ENCODE measurements at regions of chr1 and their contacts with region 1.

Region 1: GRCh38 chr1:225652729-225653462 is at the start of gene ENAH:
- DNase-seq: peak; percentile 96
- H3K4me3 ChIP-seq: peak within 1 kb of the TSS; percentile 96 to 98
- H3K27ac ChIP-seq: peak within 1 kb of the TSS; percentile 95 to 99
- H3K4me1 ChIP-seq: peaks cover 18 to 41% of the 10 kb centered on the region in 2 experiments
- H3K27me3 ChIP-seq: no peaks in the 10 kb centered on the region
- CTCF ChIP-seq: no peak
- EP300 ChIP-seq: no peak
- RAD21 ChIP-seq: no peak
- polyA plus RNA-seq, gene ENAH: 48.9 and 72.0 TPM in 2 replicates

Region 2: DNA sequence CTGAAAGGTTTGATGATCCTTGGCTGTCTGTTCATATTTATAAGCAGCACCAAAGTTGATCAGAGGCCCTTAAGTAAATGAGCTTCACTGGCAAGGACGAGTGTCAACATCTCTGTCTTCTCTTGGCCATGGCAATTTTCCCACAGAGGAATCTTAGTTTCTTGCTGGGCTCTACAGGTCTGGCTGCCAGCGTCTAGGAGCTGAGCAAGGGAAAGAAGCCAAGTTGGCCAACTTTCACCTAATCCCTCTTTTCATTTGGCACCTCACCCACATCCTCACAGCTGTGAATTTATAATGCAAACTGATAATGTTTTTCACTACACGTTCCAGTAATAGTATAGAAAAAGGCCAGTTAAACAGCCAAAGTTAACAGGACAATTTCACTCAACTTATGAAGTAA is 126.0 kb before region 1 on chr1:
- CTCF ChIA-PET with region 1: no interaction called
- POLR2A ChIA-PET with region 1: no interaction called
- DNase-seq: no peak
- H3K4me3 ChIP-seq: no peak overlapping the region
- H3K27ac ChIP-seq: no peak overlapping the region
- H3K4me1 ChIP-seq: peaks cover 2 to 4% of the 10 kb centered on the region in 2 experiments; a peak in 2 of 4 replicates
- H3K27me3 ChIP-seq: no peaks in the 10 kb centered on the region
- CTCF ChIP-seq: no peak
- EP300 ChIP-seq: no peak
- RAD21 ChIP-seq: no peak

Region 3: DNA sequence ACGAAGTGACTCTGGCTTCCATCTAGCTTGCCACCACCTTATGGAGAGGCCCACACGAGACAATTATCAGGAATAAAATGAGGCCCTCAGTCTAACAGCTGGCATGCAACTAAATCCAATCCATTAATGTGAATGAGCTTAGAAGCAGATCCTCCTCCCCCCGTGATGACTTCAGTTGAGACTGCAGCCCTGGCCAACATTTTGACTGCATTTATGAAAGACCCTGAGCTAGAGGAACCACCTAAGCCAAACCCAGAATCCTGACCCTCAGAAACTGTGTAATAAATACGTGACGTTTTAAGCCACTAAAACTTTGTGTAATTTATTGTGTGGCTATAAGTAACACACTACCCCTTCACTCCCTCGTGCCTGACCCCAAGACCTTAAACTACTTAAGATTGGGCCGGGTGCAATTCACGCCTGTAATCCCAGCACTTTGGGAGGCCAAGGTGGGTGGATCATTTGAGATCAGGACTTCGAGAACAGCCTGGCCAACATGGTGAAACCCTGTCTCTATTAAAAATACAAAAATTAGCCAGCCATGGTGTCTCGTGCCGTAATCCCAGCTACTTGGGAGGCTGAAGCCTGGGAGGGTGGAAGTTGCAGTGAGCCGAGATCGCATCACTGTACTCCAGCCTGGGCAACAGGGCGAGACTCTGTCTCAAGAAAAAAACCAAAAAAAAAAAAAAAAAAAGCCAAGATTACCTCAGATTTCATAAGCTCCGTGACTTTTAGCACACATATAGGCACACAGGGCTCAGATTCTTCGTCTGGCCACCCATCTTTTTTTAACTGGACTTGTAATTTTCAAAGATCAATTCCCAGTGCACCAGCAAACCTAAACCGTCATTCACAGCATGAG is 72.4 kb before region 1 on chr1:
- CTCF ChIA-PET with region 1: no interaction called
- POLR2A ChIA-PET with region 1: no interaction called
- DNase-seq: no peak
- H3K4me3 ChIP-seq: no peak overlapping the region
- H3K27ac ChIP-seq: peak overlapping the region in 1 of 2 experiments; percentile 66; a peak in 2 of 4 replicates
- H3K4me1 ChIP-seq: peaks cover 19 to 37% of the 10 kb centered on the region in 2 experiments
- H3K27me3 ChIP-seq: no peaks in the 10 kb centered on the region
- CTCF ChIP-seq: no peak
- EP300 ChIP-seq: no peak
- RAD21 ChIP-seq: no peak

Region 4: DNA sequence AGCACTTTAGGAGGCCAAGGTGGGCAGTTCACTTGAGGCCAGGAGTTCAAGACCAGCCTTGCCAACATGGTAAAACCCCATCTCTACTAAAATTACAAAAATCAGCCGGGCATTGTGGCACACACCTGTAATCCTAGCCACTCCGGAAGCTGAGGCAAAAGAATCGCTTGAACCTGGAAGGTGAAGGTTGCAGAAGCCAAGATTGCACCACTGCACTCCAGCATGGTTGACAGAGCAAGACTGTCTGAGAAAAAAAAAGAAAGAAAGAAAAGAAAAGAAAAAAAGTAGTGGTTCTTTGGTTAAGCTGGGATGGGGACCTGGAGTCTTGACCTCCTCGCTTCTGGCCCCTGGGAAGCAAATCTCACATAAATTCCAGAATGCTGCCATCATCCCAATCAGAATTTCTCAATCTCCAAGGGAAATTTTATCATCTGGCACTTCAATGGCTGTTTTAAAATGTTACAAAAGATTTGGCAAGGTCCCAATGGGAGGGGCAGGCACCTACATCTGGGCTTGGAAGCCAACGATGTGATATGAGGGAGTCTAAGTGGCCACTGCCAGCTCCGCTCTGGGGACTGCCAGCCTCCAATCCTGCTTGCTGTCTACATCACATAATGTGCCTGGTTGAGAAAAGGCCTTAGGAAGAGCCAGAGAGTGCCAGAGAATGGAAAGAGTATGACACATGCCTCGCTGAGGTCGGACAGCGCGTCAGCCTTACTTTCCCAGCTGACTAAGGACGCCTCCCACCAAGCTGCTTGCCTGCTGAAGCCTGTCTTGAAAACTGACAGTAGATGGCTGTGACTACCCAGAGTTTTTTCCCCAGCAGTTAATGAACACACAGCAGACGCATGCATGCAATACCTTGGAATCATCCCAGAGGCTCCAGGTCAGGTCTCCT is 82.6 kb after region 1 on chr1:
- CTCF ChIA-PET with region 1: interaction called, 3 read pairs
- POLR2A ChIA-PET with region 1: interaction called, 10 read pairs
- DNase-seq: peak; percentile 53
- H3K4me3 ChIP-seq: no peak overlapping the region
- H3K27ac ChIP-seq: peak overlapping the region; percentile 88 to 93
- H3K4me1 ChIP-seq: peaks cover 29% of the 10 kb centered on the region in 2 experiments
- H3K27me3 ChIP-seq: no peaks in the 10 kb centered on the region
- CTCF ChIP-seq: peak; percentile 31; the same call in 1 of the 2 replicates
- EP300 ChIP-seq: 0 out of 4 replicates have a peak, but pooled peaks have one; percentile 3 to 24
- RAD21 ChIP-seq: no peak; the same call in 1 of the 2 replicates

Region 5: DNA sequence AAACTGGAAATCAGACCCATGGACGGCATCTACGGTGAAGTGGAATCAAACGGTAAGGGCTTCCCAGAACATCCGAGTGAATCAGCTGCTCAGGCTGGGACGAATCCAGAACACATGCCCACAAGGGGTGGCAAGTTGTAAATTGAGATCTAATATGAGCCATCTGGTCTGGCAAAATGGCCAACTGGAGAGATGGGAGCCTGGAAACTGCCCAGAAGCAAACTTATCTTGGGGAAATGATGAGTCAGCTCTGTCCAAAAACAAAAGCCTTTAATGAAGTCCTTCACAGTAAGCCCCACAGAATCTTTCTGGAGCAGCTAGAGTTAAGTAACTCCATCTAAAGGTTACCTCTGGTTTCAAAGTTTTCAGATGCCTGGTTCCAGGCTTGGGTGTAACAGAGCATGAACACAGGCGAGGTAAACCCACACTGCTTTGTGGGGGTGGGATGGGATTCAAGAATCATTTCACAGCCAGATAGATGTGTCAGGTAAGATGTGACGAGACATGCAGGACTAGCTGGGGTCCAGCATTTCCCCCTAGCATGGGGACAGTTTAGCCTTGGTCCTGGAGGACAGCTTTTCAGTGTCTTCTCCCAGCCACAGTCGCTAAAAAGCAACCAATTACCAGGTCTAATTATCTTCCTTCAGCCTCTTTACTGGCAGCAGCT is 114.2 kb after region 1 on chr1:
- CTCF ChIA-PET with region 1: interaction called, 29 read pairs
- POLR2A ChIA-PET with region 1: interaction called, 15 read pairs
- DNase-seq: peak; percentile 72
- H3K4me3 ChIP-seq: no peak overlapping the region
- H3K27ac ChIP-seq: peak overlapping the region; percentile 81 to 90
- H3K4me1 ChIP-seq: peaks cover 43 to 64% of the 10 kb centered on the region in 2 experiments
- H3K27me3 ChIP-seq: no peaks in the 10 kb centered on the region
- CTCF ChIP-seq: no peak
- EP300 ChIP-seq: peak; percentile 71 to 93
- RAD21 ChIP-seq: no peak

Measured in SK-N-SH (cell line).